AG04449 (cell line): ENCODE measurements at regions of chr4 and their contacts with region 1.

Region 1: DNA sequence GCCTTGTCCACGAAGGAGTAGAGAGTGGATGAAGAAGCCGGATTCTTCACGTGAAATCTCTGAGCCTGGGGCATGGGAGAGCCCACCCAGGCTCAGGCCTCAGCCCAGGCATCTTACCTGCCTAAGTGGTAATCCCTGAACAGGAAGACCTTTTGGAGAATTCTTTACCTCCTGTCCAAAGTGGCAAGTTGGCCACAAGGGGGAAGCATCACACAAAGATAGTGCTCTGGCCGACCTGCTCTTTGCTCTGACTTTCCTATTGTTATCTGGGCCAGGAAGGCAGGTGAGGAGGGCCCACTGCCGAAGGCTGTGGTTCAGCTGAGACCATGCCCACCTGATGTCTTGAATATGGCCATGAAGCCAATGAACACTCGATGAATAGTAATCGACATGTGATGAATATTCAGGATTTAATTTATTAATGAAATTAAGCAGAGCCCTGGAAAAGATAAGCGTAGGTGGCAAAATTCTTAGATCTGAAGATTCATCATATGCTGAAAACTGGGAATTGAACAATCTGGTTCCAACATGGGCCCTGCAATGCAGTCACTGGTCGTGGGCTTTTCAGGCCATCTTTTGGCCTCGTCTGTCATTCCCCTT is 93.8 kb downstream of the PDGFRA start:
- DNase-seq: peak; percentile 3
- H3K4me3 ChIP-seq: no peak overlapping the region
- CTCF ChIP-seq: peak; percentile 72

Region 2: GRCh38 chr4:54082168-54082567 is 240.8 kb before region 1 on chr4:
- CTCF ChIA-PET with region 1: no interaction called
- POLR2A ChIA-PET with region 1: no interaction called
- DNase-seq: peak; percentile 96
- H3K4me3 ChIP-seq: no peak overlapping the region
- CTCF ChIP-seq: no peak

Region 3: DNA sequence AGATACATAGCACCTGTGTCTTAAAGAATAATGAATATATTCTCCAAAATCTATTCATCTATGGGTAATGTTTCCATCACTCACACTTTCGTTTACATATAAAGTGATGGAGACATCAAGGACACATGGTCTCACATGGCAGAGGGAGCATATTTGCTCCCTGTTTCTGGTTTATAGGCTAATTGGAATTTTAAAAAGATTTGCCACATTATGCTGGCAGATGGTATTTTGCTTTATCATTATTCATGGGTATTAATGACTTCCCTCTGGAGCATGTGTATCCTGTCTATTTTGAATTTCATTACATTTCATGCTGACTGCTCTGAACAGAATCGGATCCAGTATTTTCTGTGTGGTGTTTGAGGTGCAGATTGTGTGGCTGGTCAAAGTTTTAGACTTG is 14.8 kb before region 1 on chr4:
- CTCF ChIA-PET with region 1: interaction called, 38 read pairs
- POLR2A ChIA-PET with region 1: no interaction called
- DNase-seq: no peak
- H3K4me3 ChIP-seq: no peak overlapping the region
- CTCF ChIP-seq: no peak

Region 4: GRCh38 chr4:54433686-54434085 is 110.8 kb after region 1 on chr4:
- CTCF ChIA-PET with region 1: interaction called, 77 read pairs
- POLR2A ChIA-PET with region 1: no interaction called
- DNase-seq: no peak
- H3K4me3 ChIP-seq: no peak overlapping the region
- CTCF ChIP-seq: peak; percentile 10

Region 5: DNA sequence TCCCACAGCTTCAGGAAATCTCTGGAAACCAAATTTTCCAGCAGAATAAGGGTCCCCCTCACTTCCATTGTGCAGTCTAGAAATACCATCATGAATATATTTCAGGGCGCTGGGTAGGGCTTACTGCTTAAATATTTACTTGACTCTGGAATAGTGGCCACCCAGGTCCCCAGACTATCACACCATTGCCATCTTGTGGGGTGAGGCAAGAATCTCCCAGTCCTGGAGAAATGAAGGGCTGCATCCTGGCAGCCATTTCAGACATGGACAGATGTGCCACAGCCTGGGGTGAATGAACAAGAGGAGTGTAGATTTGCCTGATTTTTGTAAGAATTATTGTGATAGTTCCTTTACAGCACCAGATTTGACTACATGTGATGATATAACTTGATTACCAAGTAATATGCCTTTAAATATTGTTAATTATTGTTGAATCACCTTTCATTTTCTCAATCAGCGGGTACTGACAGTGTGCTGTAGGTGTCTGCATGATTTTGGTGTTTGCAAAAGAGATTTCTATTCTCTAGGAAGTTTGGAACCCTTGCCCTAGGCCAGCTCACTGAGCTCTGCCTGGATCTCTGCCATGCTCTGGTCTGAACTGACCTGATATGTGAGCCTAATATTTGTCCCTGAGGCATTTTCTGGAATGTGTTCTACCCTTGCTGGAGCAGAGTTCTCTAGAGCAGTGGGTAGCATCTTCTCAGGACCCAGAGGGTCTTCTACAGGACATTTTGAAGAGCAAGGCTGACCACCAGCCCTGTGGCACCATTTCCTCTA is 518.3 kb after region 1 on chr4:
- CTCF ChIA-PET with region 1: interaction called, 24 read pairs
- POLR2A ChIA-PET with region 1: no interaction called
- DNase-seq: no peak
- H3K4me3 ChIP-seq: no peak overlapping the region
- CTCF ChIP-seq: peak; percentile 45

Region 6: GRCh38 chr4:54971474-54971950 is 648.6 kb after region 1 on chr4:
- CTCF ChIA-PET with region 1: interaction called, 54 read pairs
- POLR2A ChIA-PET with region 1: no interaction called
- DNase-seq: no peak
- H3K4me3 ChIP-seq: no peak overlapping the region
- CTCF ChIP-seq: peak; percentile 60